Motor neuron (in vitro differentiated cells): ENCODE measurements at regions of chr12 and their contacts with region 1.

Region 1: GRCh38 chr12:15590180-15590826 is 198.9 kb downstream of the EPS8 start:
- ATAC-seq: peak; percentile 57 to 98 (median 72)
- H3K4me3 ChIP-seq: no peak overlapping the region
- H3K27ac ChIP-seq: no peak overlapping the region
- H3K4me1 ChIP-seq: no peaks in the 10 kb centered on the region

Region 2: DNA sequence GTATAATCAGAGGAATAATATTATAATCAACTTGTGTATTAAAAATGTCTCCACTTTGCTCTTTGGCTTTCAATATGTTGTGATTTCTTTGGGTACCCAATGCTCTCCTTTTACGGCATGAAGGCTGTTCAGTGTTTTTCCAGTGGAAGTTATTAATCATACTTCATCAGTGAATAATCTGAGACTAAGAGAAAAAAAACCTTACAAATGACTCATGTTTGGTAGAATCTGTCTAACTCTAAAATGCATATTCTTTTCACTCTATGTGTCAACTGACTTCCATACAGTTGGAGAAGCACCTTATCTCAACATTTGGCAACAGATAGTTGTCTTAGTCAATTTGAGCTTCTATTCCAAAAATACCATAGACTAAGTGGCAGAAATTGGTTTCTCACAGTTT is 185.8 kb before region 1 on chr12:
- in situ Hi-C with region 1: no loop called
- ATAC-seq: peak in 4 of 8 experiments; percentile 17 to 77 (median 30)
- H3K4me3 ChIP-seq: no peak overlapping the region
- H3K27ac ChIP-seq: no peak overlapping the region
- H3K4me1 ChIP-seq: peaks cover 0 to 8% of the 10 kb centered on the region in 2 donors

Region 3: GRCh38 chr12:15842108-15842507 is 251.8 kb after region 1 on chr12:
- in situ Hi-C with region 1: loop called in 3 of 9 experiments (anchors 25 kb)
- ATAC-seq: no peak
- H3K4me3 ChIP-seq: no peak overlapping the region
- H3K27ac ChIP-seq: no peak overlapping the region
- H3K4me1 ChIP-seq: no peaks in the 10 kb centered on the region